Activated T-helper 1 cell treated with anti-CD3 and anti-CD28 coated beads, Interleukin-12 subunit alpha, Interleukin-12 subunit beta, Interleukin-2, Interleukin-4 antibody, amounts not matched to agents 30 ng/mL and 10 ng/mL and 1 ng/mL, durations not matched to agents 14 hours and 24 hours and 36 hours (primary cell): ENCODE measurements at regions of chr14 and their contacts with region 1.

Region 1: GRCh38 chr14:73295198-73295796 is 58.0 kb downstream of the PAPLN start:
- DNase-seq: no peak
- H3K4me3 Mint-ChIP-seq: no peak overlapping the region
- H3K27ac Mint-ChIP-seq: no peak overlapping the region
- H3K4me1 Mint-ChIP-seq: peaks cover 33% of the 10 kb centered on the region
- H3K27me3 Mint-ChIP-seq: no peaks in the 10 kb centered on the region

Region 2: DNA sequence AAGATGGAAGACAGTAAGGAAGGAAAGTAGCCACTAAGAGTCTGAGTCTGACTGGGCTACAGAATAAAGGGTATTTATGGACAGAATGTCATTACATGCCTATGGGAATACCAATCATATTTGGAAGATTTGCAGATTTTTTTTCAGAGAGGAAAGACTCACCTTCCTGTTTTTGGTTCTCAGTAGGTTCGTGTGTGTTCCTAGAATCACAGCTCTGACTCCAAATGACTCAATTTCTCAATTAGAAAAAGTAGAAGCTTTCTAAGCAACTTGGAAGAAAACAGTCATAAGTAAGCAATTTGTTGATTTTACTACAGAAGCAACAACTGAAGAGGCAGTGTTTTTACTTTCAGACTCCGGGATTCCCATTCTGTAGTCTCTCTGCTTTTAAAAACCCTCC is 73.4 kb before region 1 on chr14:
- intact Hi-C with region 1: loop called (anchors 1 kb)
- DNase-seq: no peak
- H3K4me3 Mint-ChIP-seq: peak overlapping the region; percentile 6
- H3K27ac Mint-ChIP-seq: peak overlapping the region; percentile 36
- H3K4me1 Mint-ChIP-seq: peaks cover 22% of the 10 kb centered on the region
- H3K27me3 Mint-ChIP-seq: no peaks in the 10 kb centered on the region

Region 3: GRCh38 chr14:73472185-73473114 is 177.2 kb after region 1 on chr14:
- intact Hi-C with region 1: loop called (anchors 1 kb)
- DNase-seq: no peak
- H3K4me3 Mint-ChIP-seq: no peak overlapping the region
- H3K27ac Mint-ChIP-seq: no peak overlapping the region
- H3K4me1 Mint-ChIP-seq: peaks cover 25% of the 10 kb centered on the region
- H3K27me3 Mint-ChIP-seq: peaks cover 4% of the 10 kb centered on the region